HCT116 (cell line): ENCODE measurements at regions of chr1 and their contacts with region 1.

Region 1: GRCh38 chr1:229625915-229626831 is at the starts of genes TAF5L and URB2:
- DNase-seq: peak; percentile 77
- ATAC-seq: peak; percentile 94
- H3K4me3 ChIP-seq: peak within 1 kb of the TSS; percentile 91 to 97
- H3K27ac ChIP-seq: peak within 1 kb of the TSS; percentile 72
- H3K4me1 ChIP-seq: peaks cover 11 to 18% of the 10 kb centered on the region in 2 experiments; a peak in 3 of 4 replicates
- H3K27me3 ChIP-seq: no peaks in the 10 kb centered on the region
- CTCF ChIP-seq: no peak
- POLR2A ChIP-seq: no peak
- RAD21 ChIP-seq: no peak
- total RNA-seq, gene TAF5L: 22.4 TPM
- total RNA-seq, gene URB2: 20.4 TPM

Region 2: GRCh38 chr1:229558571-229559335 is 67.4 kb before region 1 on chr1 and contains the start of gene ABCB10:
- CTCF ChIA-PET with region 1: interaction called, 19 read pairs
- POLR2A ChIA-PET with region 1: no interaction called
- RAD21 ChIA-PET with region 1: no interaction called
- intact Hi-C with region 1: loop called (anchors 1 kb)
- DNase-seq: peak; percentile 95
- ATAC-seq: peak; percentile 80
- H3K4me3 ChIP-seq: peak within 1 kb of the TSS; percentile 61 to 84
- H3K27ac ChIP-seq: peak within 1 kb of the TSS; percentile 93
- H3K4me1 ChIP-seq: peaks cover 10 to 24% of the 10 kb centered on the region in 2 experiments
- H3K27me3 ChIP-seq: no peaks in the 10 kb centered on the region
- CTCF ChIP-seq: peak; percentile 81 to 87 (median 81)
- POLR2A ChIP-seq: peak; percentile 62
- RAD21 ChIP-seq: peak; percentile 45
- total RNA-seq, gene ABCB10: 20.3 TPM

Region 3: DNA sequence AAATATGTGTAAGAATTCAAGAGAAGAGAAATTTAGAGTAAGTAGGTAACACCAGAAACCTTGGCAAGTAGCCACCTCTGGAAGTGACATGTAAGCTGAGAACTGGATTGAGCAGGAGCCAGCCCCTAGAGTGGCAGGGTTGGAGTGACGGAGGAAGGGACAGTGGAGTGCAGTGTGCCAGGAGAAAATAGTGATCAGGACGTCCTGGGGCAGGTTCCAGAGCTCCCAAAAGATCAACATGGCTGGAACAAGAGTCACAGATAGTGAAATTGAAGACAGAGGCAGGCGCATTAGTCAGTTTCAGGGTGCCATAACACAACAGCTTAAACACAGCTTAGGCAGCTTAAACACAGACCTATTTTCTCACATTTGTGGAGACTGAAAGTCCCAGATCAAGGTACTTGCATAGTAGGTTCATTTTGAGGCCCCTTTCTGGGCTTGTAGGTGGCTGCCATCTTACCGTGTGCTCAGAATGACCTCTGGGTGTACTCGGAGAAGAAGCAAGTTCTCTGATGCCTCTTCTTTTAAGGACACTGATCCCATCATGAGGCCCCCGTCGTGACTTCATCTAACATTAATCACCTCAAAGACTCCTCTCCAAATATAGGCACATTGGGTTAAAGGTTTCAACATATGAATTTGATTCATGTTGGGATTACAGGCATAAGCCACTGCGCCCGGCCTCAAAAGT is 1652.1 kb after region 1 on chr1:
- CTCF ChIA-PET with region 1: no interaction called
- POLR2A ChIA-PET with region 1: no interaction called
- RAD21 ChIA-PET with region 1: no interaction called
- intact Hi-C with region 1: no loop called
- DNase-seq: no peak
- ATAC-seq: peak; percentile 47
- H3K4me3 ChIP-seq: no peak overlapping the region
- H3K27ac ChIP-seq: no peak overlapping the region
- H3K4me1 ChIP-seq: peaks cover 9 to 13% of the 10 kb centered on the region in 2 experiments
- H3K27me3 ChIP-seq: no peaks in the 10 kb centered on the region
- CTCF ChIP-seq: no peak
- POLR2A ChIP-seq: no peak
- RAD21 ChIP-seq: no peak